ENCODE measurements at regions of chr2 and their contacts with region 1.

Region 1: GRCh38 chr2:97966518-97967215 is 29.1 kb downstream of the TMEM131 start:
- DNase-seq: no peak
- ATAC-seq: peak; percentile 67
- H3K4me3 Mint-ChIP-seq: no peak overlapping the region
- H3K27ac Mint-ChIP-seq: peak overlapping the region; percentile 70
- H3K4me1 Mint-ChIP-seq: peaks cover 88% of the 10 kb centered on the region
- H3K27me3 Mint-ChIP-seq: no peaks in the 10 kb centered on the region
- CTCF ChIP-seq: no peak

Region 2: GRCh38 chr2:97788986-97789644 is 177.6 kb before region 1 on chr2:
- CTCF ChIA-PET with region 1: no interaction called
- POLR2A ChIA-PET with region 1: no interaction called
- intact Hi-C with region 1: no loop called
- DNase-seq: no peak
- ATAC-seq: no peak
- H3K4me3 Mint-ChIP-seq: no peak overlapping the region
- H3K27ac Mint-ChIP-seq: no peak overlapping the region
- H3K4me1 Mint-ChIP-seq: no peaks in the 10 kb centered on the region
- H3K27me3 Mint-ChIP-seq: no peaks in the 10 kb centered on the region
- CTCF ChIP-seq: no peak

Region 3: GRCh38 chr2:97935719-97936161 is 30.9 kb before region 1 on chr2:
- CTCF ChIA-PET with region 1: no interaction called
- POLR2A ChIA-PET with region 1: no interaction called
- intact Hi-C with region 1: loop called (anchors 5 kb)
- DNase-seq: no peak
- ATAC-seq: no peak
- H3K4me3 Mint-ChIP-seq: peak overlapping the region; percentile 56
- H3K27ac Mint-ChIP-seq: peak overlapping the region; percentile 65
- H3K4me1 Mint-ChIP-seq: peaks cover 96% of the 10 kb centered on the region
- H3K27me3 Mint-ChIP-seq: no peaks in the 10 kb centered on the region
- CTCF ChIP-seq: no peak

Region 4: DNA sequence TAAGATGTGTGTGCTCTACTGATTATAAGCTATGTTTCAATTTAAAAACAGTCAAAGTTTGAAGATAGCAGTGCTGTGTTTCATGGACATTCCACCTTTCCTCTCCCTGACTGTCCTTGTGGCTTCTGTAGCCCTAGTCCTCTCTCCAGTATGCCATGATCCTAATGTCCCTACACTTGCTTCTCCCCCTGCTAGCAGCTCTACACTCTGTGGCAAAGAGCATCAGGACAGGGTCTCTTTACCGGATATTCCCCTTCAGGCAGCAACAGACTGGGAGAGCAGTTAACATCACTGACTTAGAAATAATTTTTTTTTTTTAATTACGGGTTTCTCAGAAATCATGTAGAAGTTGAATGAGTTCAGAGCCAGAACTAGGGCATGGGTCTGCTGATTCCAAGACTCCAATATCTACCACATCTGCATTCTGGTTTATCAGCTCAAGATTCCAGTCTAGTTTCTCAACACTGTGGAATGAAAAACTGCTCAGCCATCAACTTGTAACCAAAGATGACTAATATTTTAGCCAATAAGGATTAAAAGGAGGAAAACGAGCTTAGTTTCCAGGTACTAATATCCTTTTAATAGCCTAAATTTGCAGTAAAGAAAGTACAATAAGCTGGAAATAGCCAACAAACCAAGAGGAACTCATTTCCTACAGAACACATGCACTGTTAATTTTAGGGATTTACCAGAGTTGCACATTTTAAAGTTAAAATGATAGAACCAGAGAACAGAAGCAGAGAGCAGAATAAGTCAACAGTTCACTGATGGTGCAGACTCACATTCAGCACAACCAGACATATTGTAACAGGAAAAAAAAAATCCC is 16.1 kb before region 1 on chr2:
- CTCF ChIA-PET with region 1: no interaction called
- POLR2A ChIA-PET with region 1: interaction called, 5 read pairs
- intact Hi-C with region 1: loop called (anchors 2 kb)
- DNase-seq: no peak
- ATAC-seq: no peak
- H3K4me3 Mint-ChIP-seq: no peak overlapping the region
- H3K27ac Mint-ChIP-seq: peak overlapping the region; percentile 73
- H3K4me1 Mint-ChIP-seq: peaks cover 90% of the 10 kb centered on the region
- H3K27me3 Mint-ChIP-seq: no peaks in the 10 kb centered on the region
- CTCF ChIP-seq: no peak

Region 5: GRCh38 chr2:97982621-97983020 is 16.0 kb after region 1 on chr2:
- CTCF ChIA-PET with region 1: no interaction called
- POLR2A ChIA-PET with region 1: interaction called, 6 read pairs
- intact Hi-C with region 1: loop called (anchors 1 kb)
- DNase-seq: no peak
- ATAC-seq: no peak
- H3K4me3 Mint-ChIP-seq: no peak overlapping the region
- H3K27ac Mint-ChIP-seq: no peak overlapping the region
- H3K4me1 Mint-ChIP-seq: peaks cover 66% of the 10 kb centered on the region
- H3K27me3 Mint-ChIP-seq: no peaks in the 10 kb centered on the region
- CTCF ChIP-seq: no peak

Region 6: DNA sequence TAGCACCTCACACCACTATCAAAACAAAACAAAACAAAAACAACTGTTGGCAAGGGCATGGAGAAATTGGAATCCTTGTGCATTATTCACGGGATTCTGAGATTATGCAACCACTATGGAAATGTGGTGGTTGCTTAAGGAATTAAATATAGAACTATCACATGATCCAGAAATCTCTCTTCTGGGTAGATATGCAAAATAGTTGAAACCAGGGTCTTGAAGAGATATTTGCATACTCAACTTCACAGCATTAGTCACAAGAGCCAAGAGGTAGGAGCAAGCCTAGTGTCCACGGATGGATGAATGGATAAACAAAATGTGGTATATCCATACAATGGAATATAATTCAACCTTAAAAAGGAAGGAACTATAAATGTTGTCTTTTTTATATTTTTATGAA is 22.1 kb after region 1 on chr2:
- CTCF ChIA-PET with region 1: no interaction called
- POLR2A ChIA-PET with region 1: interaction called, 6 read pairs
- intact Hi-C with region 1: loop called (anchors 2 kb)
- DNase-seq: no peak
- ATAC-seq: peak; percentile 56
- H3K4me3 Mint-ChIP-seq: peak overlapping the region; percentile 53
- H3K27ac Mint-ChIP-seq: peak overlapping the region; percentile 72
- H3K4me1 Mint-ChIP-seq: peaks cover 81% of the 10 kb centered on the region
- H3K27me3 Mint-ChIP-seq: no peaks in the 10 kb centered on the region
- CTCF ChIP-seq: no peak

Region 7: DNA sequence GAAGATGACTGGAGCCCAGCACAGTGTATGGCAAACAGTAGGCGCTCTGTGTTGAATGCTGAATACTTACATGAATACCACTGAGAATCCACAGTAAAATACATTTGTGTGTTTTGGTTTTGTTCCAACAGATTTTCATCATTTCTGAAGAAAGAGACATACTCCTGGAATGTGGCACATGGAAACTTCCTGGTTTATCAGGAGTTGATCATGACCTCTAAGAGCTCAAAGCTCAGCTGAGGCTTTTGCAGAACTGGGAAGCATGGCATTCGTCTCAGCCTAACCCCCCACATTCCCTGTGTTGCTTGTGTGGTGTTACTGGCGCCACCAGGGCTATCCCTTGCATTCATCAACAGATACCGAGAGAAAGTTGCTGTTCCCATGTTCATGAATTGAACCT is 1840.1 kb after region 1 on chr2:
- CTCF ChIA-PET with region 1: no interaction called
- POLR2A ChIA-PET with region 1: no interaction called
- intact Hi-C with region 1: no loop called
- DNase-seq: no peak
- ATAC-seq: no peak
- H3K4me3 Mint-ChIP-seq: no peak overlapping the region
- H3K27ac Mint-ChIP-seq: no peak overlapping the region
- H3K4me1 Mint-ChIP-seq: peaks cover 62% of the 10 kb centered on the region
- H3K27me3 Mint-ChIP-seq: no peaks in the 10 kb centered on the region
- CTCF ChIP-seq: no peak